ENCODE measurements at regions of chr10 and their contacts with region 1.

Region 1: GRCh38 chr10:102713814-102714620 is at the start of gene ARL3:
- DNase-seq: peak; percentile 97
- H3K4me3 ChIP-seq: peak within 1 kb of the TSS; percentile 81 to 93
- H3K27ac ChIP-seq: peak within 1 kb of the TSS; percentile 85 to 91
- H3K4me1 ChIP-seq: no peaks in the 10 kb centered on the region
- H3K27me3 ChIP-seq: no peaks in the 10 kb centered on the region
- CTCF ChIP-seq: peak in 2 of 4 experiments; percentile 51 to 52
- POLR2A ChIP-seq: peak; percentile 42
- total RNA-seq, gene ARL3: 8.0 to 8.5 TPM

Region 2: DNA sequence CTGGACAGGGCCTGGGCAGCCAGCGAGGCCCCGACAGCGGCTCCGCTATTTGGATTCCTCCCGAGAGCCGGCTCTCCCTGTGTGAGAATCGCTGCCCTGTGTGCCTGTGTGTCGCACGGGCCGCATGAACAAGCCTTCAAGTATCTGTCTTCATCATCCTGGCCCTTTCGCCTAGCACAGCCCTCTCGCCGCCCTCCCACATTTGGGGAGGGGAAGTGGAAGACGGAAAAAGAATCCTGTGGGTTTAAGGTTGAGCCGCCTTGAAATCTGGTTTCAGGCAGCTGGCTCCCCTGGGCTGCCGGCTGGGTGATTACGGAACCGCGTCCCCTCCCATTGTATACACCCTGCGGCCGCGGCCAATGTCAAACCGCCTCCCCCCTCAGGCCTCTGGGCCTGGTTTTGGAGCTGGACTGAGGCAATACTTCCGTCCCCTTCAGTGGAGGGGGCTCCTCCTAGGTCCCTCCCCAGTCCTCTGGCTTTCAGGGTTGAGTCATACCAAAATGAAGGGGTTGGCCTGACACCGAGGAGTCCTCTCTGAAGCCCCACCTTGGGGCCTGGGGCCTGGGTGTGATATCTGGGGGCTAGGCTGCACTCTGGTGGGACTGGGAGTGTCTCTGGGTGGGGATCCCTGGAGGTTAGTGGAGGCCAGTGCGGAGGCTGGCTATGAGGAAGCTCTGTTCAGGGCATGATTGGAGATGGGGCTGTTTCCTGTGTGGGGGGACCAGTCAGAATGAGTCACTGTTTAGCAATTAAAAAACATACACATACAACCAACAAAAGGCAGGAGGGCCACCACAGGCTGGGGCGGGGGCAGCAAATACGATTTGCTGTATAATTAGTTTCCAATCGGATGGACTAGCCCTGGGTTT is 68.0 kb before region 1 on chr10:
- intact Hi-C with region 1: loop called (anchors 5 kb)
- DNase-seq: peak; percentile 73
- H3K4me3 ChIP-seq: peak overlapping the region; percentile 83 to 87
- H3K27ac ChIP-seq: peak overlapping the region; percentile 97 to 99
- H3K4me1 ChIP-seq: peaks cover 31% of the 10 kb centered on the region
- H3K27me3 ChIP-seq: no peaks in the 10 kb centered on the region
- CTCF ChIP-seq: peak in 2 of 4 experiments; percentile 7 to 9
- POLR2A ChIP-seq: peak; percentile 52

Region 3: DNA sequence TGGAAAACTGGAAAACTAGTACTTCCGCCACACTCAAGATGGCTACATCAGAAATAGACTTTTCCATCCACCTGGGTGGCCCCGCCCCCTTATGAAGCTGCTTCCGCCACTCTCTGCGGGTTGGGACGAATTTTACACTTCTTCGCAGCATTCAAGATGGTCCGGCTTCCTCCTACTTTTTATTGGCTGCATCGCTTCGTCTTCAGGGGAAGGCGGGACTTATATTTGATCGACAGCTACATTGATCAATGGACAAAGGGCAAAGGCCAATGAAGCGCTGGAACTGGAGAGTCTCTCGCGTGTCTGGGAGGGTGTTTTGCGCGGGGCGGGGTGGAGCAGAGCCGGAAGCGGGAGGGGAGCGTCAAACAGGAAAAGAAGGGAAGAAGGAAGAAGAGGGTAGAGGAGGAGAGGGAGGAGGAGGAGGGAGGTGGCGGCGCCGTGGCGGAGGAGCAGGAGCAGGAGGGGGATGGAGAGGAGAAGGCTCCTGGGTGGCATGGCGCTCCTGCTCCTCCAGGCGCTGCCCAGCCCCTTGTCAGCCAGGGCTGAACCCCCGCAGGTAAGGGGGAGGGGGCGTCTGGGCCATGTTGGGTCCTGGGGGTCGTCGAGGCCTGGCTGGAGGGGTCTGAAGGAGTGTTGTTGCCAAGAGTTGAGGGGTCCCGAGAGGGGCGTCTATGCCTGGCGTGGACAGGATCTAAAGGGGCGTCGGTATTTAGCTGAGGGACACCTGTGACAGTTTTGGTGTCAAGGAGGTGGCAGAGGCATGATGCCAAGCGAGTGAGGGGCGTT is 29.8 kb after region 1 on chr10 and contains the start of gene WBP1L:
- intact Hi-C with region 1: loop called (anchors 2 kb)
- DNase-seq: peak; percentile 99
- H3K4me3 ChIP-seq: peak within 1 kb of the TSS; percentile 74 to 95
- H3K27ac ChIP-seq: peak within 1 kb of the TSS; percentile 79 to 90
- H3K4me1 ChIP-seq: no peaks in the 10 kb centered on the region
- H3K27me3 ChIP-seq: no peaks in the 10 kb centered on the region
- CTCF ChIP-seq: no peak
- POLR2A ChIP-seq: peak; percentile 92
- total RNA-seq, gene WBP1L: 136 to 168 TPM

Measured in prostate gland (tissue), 2 donors.